ENCODE measurements at regions of chr14 and their contacts with region 1.

Region 1: DNA sequence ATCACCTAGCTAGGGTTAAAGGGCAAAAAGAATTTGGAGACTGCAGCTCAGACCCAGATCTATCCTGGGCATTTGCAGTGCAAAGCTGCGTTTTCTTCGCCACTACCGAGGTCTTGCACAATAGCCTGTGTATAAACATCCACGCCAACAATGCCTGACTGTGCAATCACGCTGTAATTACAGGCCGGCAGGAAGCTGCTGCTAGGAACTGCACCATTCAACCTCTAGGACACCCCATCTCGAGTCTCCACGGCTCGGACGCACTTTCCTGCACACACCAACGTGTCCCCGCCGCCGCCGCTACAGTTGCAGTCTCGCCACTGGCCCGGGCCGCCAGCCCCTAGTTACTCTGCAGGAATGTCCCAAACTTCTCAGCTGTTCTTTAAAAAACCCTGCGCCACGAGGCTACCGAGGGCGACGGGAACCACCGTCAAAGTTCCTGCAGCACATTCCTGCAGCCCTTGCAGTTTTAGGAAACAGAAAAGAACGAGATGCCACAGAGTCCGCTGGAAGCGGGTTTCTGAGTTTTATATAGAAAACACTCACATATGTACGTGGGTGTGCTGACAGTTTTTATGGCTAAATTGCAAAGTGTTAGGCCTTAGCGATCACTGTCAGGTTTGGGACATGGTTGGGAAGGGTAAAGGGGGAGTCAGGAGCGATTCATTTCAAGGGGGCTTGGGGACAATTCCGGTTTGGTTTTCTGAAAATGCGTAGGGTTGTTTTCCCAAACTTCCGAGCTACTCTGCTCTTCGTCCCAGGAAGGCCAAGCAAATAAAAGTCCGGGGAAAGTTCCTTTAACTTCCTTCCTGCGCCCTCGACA is 65.5 kb upstream of the PTGR2 start:
- DNase-seq: peak; percentile 64
- H3K4me3 Mint-ChIP-seq: peak overlapping the region; percentile 88
- H3K27ac Mint-ChIP-seq: peak overlapping the region; percentile 87
- H3K4me1 Mint-ChIP-seq: peaks cover 60% of the 10 kb centered on the region
- H3K27me3 Mint-ChIP-seq: no peaks in the 10 kb centered on the region

Region 2: DNA sequence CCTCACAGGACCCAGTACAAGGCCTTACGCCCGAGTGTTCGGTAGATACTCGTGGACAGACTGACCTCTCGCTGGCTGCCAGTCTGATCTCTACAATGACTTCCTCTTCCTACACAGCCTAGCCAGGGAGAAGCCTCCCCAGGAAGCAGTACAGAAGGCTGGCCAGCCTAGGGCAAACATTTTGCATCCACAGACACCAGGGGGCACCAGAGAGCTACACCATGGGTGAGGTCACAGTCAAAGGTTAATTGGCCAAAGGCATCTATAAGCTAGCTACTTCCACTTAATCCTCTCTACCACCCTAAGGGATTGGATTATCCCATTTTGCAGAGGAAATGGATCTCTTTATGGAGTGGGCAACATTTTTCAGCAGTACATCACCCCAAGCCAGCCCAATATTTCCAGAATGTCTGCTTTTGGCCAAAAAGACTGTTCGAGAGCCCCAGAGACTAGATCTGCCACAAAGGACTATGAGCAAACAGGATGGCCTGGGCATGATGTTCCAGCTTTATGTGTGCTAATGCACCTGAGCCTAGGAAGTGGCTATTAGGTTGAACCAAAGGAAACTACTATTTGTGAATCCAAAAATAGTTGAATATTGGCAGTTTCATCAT is 57.3 kb before region 1 on chr14:
- intact Hi-C with region 1: loop called (anchors 5 kb)
- DNase-seq: peak; percentile 77
- H3K4me3 Mint-ChIP-seq: no peak overlapping the region
- H3K27ac Mint-ChIP-seq: peak overlapping the region; percentile 84
- H3K4me1 Mint-ChIP-seq: peaks cover 35% of the 10 kb centered on the region
- H3K27me3 Mint-ChIP-seq: no peaks in the 10 kb centered on the region

Region 3: DNA sequence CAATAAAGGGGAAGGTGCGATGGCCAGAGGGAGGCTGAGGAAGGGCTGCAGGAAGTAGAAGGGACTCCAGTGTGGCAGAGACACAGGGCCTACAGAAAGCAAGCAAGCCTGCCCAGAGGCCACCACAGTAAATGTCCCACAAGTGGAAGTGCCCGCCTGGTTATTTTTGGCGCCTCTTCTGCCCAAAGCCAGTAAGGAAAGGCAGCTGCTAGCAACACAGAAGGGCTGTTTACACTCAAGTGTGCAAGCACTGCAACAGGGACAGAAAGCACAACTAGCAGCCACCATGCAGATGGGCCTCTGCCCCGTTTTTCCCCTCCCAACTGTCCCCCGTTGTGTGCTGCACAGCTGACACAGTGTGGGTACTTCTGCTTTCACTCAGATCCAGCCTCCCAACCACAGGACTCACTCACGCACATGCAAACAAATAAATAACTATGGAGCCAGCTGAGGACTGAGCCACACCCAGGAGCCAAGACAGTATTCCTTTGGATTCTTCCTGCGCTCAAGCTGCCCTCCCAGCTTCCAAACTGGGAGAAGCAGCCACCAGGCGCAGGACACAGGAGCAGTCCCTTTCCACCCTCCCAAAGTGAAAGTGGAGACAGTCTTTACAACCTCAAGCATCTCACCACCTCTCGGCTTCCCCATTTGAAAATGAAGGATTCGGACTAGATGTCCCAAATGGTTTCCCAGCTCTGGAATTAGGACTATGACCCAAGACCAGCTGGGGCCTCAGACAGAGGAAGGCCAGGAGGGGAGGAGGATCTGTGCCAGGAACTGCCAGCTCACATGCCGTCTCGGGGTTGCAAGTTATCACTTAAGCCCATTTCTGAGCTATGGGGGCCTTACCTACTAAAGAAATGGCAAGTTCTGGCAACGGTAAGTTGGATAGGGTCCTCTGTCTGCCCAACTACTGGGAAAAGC is 31.9 kb before region 1 on chr14:
- intact Hi-C with region 1: loop called (anchors 1 kb)
- DNase-seq: peak; percentile 50
- H3K4me3 Mint-ChIP-seq: peak overlapping the region; percentile 91
- H3K27ac Mint-ChIP-seq: peak overlapping the region; percentile 75
- H3K4me1 Mint-ChIP-seq: peaks cover 87% of the 10 kb centered on the region
- H3K27me3 Mint-ChIP-seq: no peaks in the 10 kb centered on the region

Region 4: DNA sequence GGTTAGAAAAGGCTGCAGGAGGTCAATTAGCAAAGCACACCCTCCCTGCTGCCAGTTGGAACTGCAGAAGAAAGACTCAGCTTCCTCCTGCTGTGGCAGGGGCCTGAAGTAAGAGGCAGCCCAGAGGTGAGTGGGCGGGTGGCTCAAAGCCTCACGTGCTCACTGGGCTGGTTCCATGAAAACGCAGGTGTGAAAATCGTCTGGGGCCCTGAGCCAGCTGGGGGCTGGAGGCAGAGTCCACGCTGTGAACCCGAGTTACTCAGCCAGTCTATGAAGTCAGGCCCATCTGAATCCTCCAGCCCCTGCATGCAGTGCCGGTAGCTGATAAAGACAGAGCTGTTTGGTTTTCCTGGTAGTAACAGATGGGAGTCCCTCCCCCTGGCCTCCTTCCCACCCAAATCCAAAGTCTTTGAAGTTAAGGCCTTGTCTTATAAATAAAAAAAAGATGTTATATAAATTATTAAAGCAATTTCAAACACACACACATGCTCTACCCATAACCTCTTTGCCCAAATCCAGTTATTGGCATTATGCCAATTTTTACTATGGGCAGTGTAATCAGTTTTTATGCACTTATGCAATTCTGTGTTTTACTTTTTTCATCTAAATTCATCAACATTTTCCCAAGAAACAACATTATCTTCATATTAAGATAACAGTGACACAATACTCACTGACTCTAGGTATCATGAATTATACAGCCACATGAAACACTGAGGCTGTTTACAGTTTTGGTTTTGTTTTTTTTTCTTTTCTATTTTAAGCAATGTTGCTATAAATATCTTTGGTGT is 14.0 kb before region 1 on chr14:
- intact Hi-C with region 1: loop called (anchors 1 kb)
- DNase-seq: peak; percentile 49
- H3K4me3 Mint-ChIP-seq: peak overlapping the region; percentile 49
- H3K27ac Mint-ChIP-seq: peak overlapping the region; percentile 62
- H3K4me1 Mint-ChIP-seq: peaks cover 57% of the 10 kb centered on the region
- H3K27me3 Mint-ChIP-seq: no peaks in the 10 kb centered on the region

Region 5: DNA sequence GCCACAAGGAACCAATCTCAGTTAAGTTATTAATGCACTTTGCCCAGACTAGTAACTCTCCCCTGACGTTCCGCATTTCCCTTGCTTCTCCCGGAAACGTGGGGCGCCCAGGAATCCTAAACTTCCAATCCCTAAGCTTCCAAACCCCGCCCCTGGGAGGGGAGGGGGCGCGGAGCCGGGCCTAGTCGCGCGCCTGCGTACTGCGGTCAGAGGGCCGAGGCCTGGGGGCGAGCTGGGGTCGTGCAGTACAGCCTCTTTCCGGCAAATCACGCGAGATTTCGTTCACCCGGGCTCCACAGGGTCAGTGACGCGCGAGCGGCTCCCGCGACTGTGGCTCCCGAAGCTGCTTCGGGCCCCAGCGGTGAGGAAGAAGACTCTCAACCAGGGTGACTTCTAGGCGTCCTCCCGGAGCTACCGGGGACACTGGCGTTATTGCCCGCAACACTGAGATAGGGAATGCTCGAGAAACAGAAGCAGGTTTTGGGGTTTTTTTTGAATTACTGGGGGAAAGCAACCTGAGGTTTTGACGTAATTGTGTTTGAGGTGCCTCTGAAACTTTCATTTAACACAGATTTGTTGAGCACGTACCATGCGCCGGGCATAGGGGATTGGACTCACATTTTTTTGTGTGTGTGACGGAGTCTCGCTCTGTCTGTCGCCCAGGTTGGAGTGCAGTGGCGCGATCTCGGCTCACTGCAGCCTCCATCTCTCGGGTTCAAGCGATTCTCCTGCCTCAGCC is 65.7 kb after region 1 on chr14 and contains the start of gene PTGR2:
- intact Hi-C with region 1: loop called (anchors 5 kb)
- DNase-seq: peak; percentile 81
- H3K4me3 Mint-ChIP-seq: peak within 1 kb of the TSS; percentile 90
- H3K27ac Mint-ChIP-seq: peak within 1 kb of the TSS; percentile 96
- H3K4me1 Mint-ChIP-seq: peaks cover 14% of the 10 kb centered on the region
- H3K27me3 Mint-ChIP-seq: peaks cover 2% of the 10 kb centered on the region
- total RNA-seq, gene PTGR2: 1.4 and 1.6 TPM in 2 replicates

Region 6: GRCh38 chr14:73862480-73862879 is 76.4 kb after region 1 on chr14:
- intact Hi-C with region 1: no loop called
- DNase-seq: no peak
- H3K4me3 Mint-ChIP-seq: no peak overlapping the region
- H3K27ac Mint-ChIP-seq: no peak overlapping the region
- H3K4me1 Mint-ChIP-seq: peaks cover under 1% of the 10 kb centered on the region
- H3K27me3 Mint-ChIP-seq: peaks cover 1% of the 10 kb centered on the region